ENCODE measurements at regions of chr4 and their contacts with region 1.

Region 1: GRCh38 chr4:10164877-10165283 is 48.3 kb upstream of the WDR1 start:
- DNase-seq: no peak
- H3K4me3 ChIP-seq: no peak overlapping the region
- CTCF ChIP-seq: peak; percentile 62

Region 2: GRCh38 chr4:9994246-9994847 is 170.5 kb before region 1 on chr4:
- CTCF ChIA-PET with region 1: no interaction called
- POLR2A ChIA-PET with region 1: no interaction called
- DNase-seq: no peak
- H3K4me3 ChIP-seq: no peak overlapping the region
- CTCF ChIP-seq: no peak

Region 3: GRCh38 chr4:10151182-10151581 is 13.7 kb before region 1 on chr4:
- CTCF ChIA-PET with region 1: interaction called, 14 read pairs
- POLR2A ChIA-PET with region 1: no interaction called
- DNase-seq: no peak
- H3K4me3 ChIP-seq: no peak overlapping the region
- CTCF ChIP-seq: no peak

Region 4: DNA sequence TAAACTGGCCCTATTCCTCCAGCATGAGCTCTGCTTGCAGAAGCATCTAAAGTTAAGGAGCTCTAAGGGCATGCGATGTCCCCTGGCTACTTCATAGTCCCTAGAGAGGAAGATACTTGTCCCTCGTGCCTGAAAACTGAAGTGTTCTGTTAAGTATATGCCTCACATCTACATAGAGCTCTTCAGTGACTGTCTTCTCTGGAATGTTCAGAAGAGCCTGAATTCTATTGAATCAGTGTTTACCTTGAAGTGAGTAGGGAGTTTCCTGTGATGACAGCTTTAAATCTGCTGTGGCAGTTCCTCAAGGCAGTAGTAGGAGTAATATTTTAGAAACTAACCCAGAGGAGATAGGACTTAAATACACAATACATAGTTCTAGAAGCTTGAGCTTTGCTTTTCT is 181.1 kb after region 1 on chr4:
- CTCF ChIA-PET with region 1: no interaction called
- POLR2A ChIA-PET with region 1: no interaction called
- DNase-seq: no peak
- H3K4me3 ChIP-seq: no peak overlapping the region
- CTCF ChIP-seq: no peak

Region 5: DNA sequence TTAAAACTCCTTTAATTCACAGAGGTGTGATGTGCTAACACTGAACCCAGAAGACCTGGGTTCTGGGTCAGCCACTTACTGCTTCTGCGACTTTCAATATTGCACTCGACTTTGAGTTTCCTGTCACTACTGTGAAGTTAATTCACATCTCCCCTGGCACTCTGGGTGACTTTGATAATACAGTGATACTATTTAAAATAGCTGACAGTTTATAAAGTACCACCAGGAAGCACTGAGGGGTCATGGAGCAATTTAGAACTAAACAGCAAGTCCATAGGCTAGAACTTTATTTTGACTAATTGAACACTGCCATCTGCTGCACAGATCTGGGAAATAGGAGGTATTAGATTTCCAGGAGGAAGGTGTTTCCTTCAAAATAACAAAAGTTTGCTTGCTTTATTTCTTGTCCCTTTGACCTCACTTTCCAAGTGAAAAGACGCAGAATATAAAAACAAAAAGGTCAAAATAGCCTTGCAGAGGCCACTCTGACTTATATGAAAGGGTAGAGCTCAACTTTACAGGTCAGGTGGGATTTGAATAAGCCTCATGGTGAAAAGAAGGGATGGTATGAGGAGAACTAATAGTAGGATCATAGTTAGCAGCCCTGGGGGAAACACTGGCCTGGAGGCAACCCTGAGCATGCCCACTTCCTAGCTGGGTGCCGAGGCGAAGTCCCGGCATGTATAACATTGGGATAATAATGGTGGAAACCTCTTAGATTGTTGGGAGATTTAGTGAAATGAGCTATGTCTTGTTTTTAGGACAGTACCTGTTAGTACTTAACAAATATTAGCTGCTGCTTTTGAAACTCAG is 239.0 kb after region 1 on chr4:
- CTCF ChIA-PET with region 1: interaction called, 287 read pairs
- POLR2A ChIA-PET with region 1: no interaction called
- DNase-seq: peak; percentile 3
- H3K4me3 ChIP-seq: no peak overlapping the region
- CTCF ChIP-seq: peak; percentile 23

Region 6: DNA sequence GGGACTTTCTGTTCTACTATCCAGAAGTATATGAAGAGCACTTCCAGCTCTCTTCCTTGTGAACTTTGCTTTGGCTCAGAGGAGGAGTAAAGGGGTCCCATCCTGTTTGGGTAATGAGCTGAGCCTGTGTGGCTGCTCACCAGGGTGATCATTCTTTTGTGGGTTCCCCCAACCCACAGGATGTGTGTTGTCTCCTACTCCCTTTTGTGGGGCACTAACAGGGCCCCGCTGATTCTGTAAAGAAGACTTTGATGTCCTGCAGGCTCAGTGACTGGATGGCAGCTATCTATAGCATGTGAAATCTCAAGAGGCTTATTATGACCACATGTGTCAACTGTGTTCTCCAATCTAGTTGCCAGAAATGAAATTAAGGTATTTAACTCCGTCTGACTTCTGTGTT is 251.6 kb after region 1 on chr4:
- CTCF ChIA-PET with region 1: interaction called, 10 read pairs
- POLR2A ChIA-PET with region 1: no interaction called
- DNase-seq: no peak
- H3K4me3 ChIP-seq: no peak overlapping the region
- CTCF ChIP-seq: no peak

Measured in AG04449 (cell line).